Mammary epithelial cell (primary cell): ENCODE measurements at regions of chr20 and their contacts with region 1.

Region 1: DNA sequence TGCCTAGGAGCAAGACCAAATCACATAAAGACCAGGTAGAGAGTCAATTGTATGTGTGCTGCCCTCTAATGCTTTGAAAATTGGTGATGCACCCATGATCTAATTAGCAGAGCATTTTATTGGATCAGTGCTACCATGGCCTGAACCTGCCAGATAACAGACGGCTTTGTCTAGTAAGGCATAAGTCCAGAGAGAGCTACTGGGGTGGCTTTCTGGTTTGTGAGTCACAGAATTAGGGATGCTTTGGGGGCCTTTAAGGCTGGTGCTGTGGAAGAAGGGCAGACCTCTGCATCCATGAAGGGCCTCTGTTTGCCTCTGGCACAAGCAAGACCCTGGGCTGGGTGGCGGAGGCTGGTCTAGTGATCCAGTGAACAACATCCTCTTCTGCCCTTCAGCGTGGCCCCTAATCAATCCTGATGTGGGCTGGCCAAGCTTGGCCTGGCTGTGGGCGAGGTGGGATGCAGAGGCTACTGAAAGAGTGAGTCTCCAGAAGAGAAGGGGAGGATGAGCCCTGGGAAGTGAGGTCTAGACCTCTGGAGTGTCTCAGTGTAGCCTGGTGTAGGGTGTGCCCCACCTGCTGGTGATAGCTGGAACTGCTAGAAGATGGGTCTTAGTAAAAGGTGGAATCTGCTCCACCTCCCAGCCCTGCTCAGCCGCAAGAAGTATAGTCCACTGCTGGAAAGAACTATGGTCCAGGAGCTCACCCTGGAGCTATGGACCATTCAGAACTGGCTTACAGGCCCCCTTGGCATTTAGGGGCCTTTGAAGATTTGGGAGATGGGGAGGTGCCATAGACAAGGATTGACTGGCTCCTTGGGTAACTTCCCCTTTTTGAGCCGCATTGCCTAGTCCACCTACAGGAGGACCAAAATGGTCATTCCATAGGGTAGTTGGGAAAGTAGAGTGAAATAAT is 36.7 kb upstream of the AAR2 start:
- DNase-seq: peak; percentile 54
- H3K4me3 ChIP-seq: no peak overlapping the region
- H3K27ac ChIP-seq: no peak overlapping the region
- H3K4me1 ChIP-seq: no peaks in the 10 kb centered on the region
- H3K27me3 ChIP-seq: no peaks in the 10 kb centered on the region
- CTCF ChIP-seq: peak; percentile 92 to 97

Region 2: GRCh38 chr20:35561268-35561667 is 638.3 kb before region 1 on chr20:
- CTCF ChIA-PET with region 1: no interaction called
- dilution Hi-C with region 1: no loop called
- in situ Hi-C with region 1: no loop called
- intact Hi-C with region 1: no loop called
- DNase-seq: no peak
- H3K4me3 ChIP-seq: no peak overlapping the region
- H3K27ac ChIP-seq: no peak overlapping the region
- H3K4me1 ChIP-seq: no peaks in the 10 kb centered on the region
- H3K27me3 ChIP-seq: no peaks in the 10 kb centered on the region
- CTCF ChIP-seq: peak in 1 of 2 donors; percentile 2

Region 3: GRCh38 chr20:36153736-36154699 is 45.6 kb before region 1 on chr20:
- CTCF ChIA-PET with region 1: interaction called, 3 read pairs
- dilution Hi-C with region 1: no loop called
- in situ Hi-C with region 1: loop called in 1 of 2 experiments (anchors 10 kb)
- intact Hi-C with region 1: loop called (anchors 1 kb)
- DNase-seq: peak; percentile 51
- H3K4me3 ChIP-seq: peak overlapping the region; percentile 11 to 56 (median 47)
- H3K27ac ChIP-seq: no peak overlapping the region
- H3K4me1 ChIP-seq: peaks cover 16% of the 10 kb centered on the region
- H3K27me3 ChIP-seq: no peaks in the 10 kb centered on the region
- CTCF ChIP-seq: no peak

Region 4: GRCh38 chr20:36919715-36920333 is 720.2 kb after region 1 on chr20:
- CTCF ChIA-PET with region 1: no interaction called
- dilution Hi-C with region 1: no loop called
- in situ Hi-C with region 1: no loop called
- intact Hi-C with region 1: loop called (anchors 1 kb)
- DNase-seq: peak; percentile 42
- H3K4me3 ChIP-seq: no peak overlapping the region
- H3K27ac ChIP-seq: no peak overlapping the region
- H3K4me1 ChIP-seq: no peaks in the 10 kb centered on the region
- H3K27me3 ChIP-seq: no peaks in the 10 kb centered on the region
- CTCF ChIP-seq: peak; percentile 89 to 92